ENCODE measurements at regions of chr12 and their contacts with region 1.

Region 1: DNA sequence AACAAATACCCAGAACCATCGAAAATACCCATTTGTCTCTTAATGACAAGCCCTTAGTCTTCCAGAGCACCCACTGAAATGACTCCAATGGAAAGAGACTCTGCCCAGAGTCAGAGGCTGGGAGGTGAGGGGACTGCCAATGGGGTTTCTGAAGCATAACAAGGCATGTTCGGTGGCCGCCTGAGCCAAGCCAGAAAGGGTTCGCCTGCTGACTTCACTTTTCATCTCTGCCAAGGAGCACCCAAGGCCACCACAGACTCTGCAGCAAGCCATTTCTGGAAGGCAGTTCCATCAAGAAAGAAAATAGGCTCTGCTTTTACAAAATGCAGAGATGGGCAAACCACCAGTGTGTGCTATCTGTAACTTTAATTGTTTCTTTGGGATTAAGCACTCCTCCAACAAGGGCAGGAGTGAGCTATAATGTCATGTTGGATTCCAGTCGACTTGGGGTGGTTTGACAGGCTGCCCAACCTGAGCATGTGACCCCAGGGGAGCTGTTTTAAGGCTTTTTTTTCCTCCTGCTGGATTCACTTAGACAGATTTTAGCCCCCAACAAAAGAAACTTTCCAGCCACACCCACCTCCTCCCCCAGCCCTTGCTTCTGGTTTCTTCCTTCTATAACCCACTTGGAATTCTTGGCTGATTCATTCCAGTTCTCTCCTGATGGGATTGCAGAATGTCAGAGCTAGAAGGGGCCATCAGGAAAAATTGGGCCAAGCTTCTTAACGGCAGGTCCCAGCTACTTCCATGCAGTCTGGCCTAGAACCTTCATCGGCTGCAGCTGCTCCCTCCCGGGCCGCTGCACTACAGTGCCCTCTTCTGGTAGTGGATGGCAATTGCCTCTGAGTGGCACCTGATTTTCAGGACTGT is 24.1 kb downstream of the CKAP4 start:
- DNase-seq: peak; percentile 76
- H3K4me3 Mint-ChIP-seq: no peak overlapping the region
- H3K27ac Mint-ChIP-seq: no peak overlapping the region
- H3K4me1 Mint-ChIP-seq: peaks cover 22% of the 10 kb centered on the region
- H3K27me3 Mint-ChIP-seq: peaks cover 3% of the 10 kb centered on the region

Region 2: DNA sequence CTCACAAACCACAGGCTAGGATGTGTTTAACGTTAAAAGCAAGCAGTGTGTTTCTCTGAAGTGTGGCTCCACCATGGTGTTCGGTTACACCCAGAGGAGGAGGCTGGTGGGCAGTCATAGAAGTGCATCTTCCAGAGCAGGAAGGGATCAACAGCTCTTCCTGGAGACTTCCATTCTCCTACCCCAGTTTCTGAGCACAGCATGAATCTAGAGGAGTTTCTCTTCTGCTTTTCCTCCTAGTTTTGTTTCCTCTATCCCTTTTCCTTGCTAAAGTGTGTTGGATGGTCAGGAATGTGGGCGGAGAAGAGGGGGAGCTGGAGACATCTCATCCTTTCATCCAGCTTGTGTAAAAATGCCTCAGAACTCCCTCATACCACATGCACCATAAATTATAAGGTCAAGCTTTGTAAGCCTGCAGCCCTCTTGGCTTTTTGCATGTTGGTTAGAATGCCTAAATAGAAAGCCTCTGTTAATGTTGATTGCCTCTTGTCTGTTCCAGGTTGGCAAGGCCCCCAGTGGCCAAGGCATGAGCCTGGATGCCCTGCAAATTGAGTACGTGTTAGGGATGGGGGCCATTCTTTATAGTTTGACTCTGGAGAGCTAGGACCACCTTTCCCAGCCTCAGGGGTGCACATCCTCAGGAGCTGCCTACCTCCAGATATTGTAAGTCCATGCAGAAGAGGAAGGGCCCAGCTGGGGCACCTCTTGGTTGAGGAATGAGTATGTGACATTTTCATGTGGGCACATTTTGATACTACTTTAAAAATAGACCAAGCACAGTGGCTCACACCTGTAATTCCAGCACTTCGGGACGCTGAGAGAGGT is 28.1 kb after region 1 on chr12:
- CTCF ChIA-PET with region 1: interaction called, 13 read pairs
- POLR2A ChIA-PET with region 1: interaction called, 6 read pairs
- DNase-seq: no peak
- H3K4me3 Mint-ChIP-seq: no peak overlapping the region
- H3K27ac Mint-ChIP-seq: no peak overlapping the region
- H3K4me1 Mint-ChIP-seq: peaks cover 9% of the 10 kb centered on the region
- H3K27me3 Mint-ChIP-seq: peaks cover 16% of the 10 kb centered on the region

Region 3: GRCh38 chr12:106282457-106283097 is 58.9 kb after region 1 on chr12:
- CTCF ChIA-PET with region 1: interaction called, 100 read pairs
- POLR2A ChIA-PET with region 1: interaction called, 6 read pairs
- DNase-seq: peak; percentile 56
- H3K4me3 Mint-ChIP-seq: no peak overlapping the region
- H3K27ac Mint-ChIP-seq: no peak overlapping the region
- H3K4me1 Mint-ChIP-seq: peaks cover 13% of the 10 kb centered on the region
- H3K27me3 Mint-ChIP-seq: peaks cover 6% of the 10 kb centered on the region

Region 4: GRCh38 chr12:106302401-106303201 is 78.9 kb after region 1 on chr12 and contains the start of gene TCP11L2:
- CTCF ChIA-PET with region 1: interaction called, 7 read pairs
- POLR2A ChIA-PET with region 1: interaction called, 12 read pairs
- DNase-seq: peak; percentile 90
- H3K4me3 Mint-ChIP-seq: peak within 1 kb of the TSS; percentile 94
- H3K27ac Mint-ChIP-seq: peak within 1 kb of the TSS; percentile 98
- H3K4me1 Mint-ChIP-seq: peaks cover 35% of the 10 kb centered on the region
- H3K27me3 Mint-ChIP-seq: no peaks in the 10 kb centered on the region
- total RNA-seq, gene TCP11L2: 25.1 to 27.8 TPM

Region 5: GRCh38 chr12:106436164-106436563 is 212.4 kb after region 1 on chr12:
- CTCF ChIA-PET with region 1: no interaction called
- POLR2A ChIA-PET with region 1: no interaction called
- DNase-seq: no peak
- H3K4me3 Mint-ChIP-seq: no peak overlapping the region
- H3K27ac Mint-ChIP-seq: no peak overlapping the region
- H3K4me1 Mint-ChIP-seq: no peaks in the 10 kb centered on the region
- H3K27me3 Mint-ChIP-seq: no peaks in the 10 kb centered on the region